ENCODE measurements at regions of chr7 and their contacts with region 1.

Region 1: DNA sequence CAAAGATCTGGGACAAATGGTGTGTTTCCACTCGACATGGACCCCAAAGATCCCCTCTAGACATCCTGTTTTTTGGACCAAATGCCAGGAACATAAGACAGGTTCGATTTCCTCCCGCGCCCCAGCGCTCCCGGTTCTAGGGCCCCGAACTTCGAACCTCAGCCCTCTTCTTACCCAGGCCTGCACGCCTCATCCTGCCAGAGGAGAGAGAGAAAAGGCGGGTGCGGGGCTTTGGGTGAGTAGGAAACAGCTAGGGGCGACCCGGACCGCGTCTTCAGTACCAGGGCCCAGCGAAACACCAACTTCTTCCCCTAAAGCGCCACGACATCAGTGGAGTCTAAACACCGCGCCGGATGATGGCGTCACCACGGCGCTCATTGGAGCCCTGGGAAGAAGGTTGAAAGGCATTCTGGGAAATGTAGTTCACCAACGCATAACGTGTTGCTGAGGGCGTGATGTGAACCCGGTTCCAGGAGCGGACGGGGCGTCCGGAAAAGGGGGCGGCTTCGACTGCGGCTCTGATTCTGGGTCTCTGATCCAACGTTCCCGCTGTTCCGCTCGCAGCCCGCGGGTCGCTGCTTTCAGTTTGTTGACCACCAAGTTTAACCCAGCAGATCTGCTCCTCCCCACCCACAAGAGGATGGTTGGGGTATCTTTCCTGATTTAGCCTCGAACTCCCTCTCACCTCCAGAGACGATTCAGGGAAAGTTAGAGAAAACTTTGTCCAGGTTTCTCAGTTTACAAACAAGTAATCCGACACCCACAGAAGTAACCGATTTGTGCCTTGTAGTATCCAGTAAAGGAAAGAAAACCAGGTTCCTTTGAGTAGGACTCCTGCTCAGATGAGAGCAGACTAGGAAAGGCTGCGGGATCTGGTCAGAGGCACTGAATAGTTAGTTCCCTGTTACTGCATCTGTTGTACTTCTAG is at the start of gene BET1:
- DNase-seq: peak; percentile 88 to 98
- H3K4me3 ChIP-seq: peak within 1 kb of the TSS; percentile 81 to 94
- H3K27ac ChIP-seq: peak within 1 kb of the TSS; percentile 89 to 91
- H3K4me1 ChIP-seq: peaks cover 0 to 3% of the 10 kb centered on the region in 2 donors
- H3K27me3 ChIP-seq: no peaks in the 10 kb centered on the region
- CTCF ChIP-seq: no peak
- total RNA-seq, gene BET1: 2.4 TPM

Region 2: GRCh38 chr7:93231799-93232672 is 772.3 kb before region 1 on chr7 and contains the start of gene VPS50:
- intact Hi-C with region 1: loop called (anchors 5 kb)
- DNase-seq: peak; percentile 86 to 98
- H3K4me3 ChIP-seq: peak within 1 kb of the TSS; percentile 90 to 91
- H3K27ac ChIP-seq: peak within 1 kb of the TSS in 1 of 2 donors; percentile 29
- H3K4me1 ChIP-seq: peaks cover 0 to 6% of the 10 kb centered on the region in 2 donors
- H3K27me3 ChIP-seq: no peaks in the 10 kb centered on the region
- CTCF ChIP-seq: no peak
- total RNA-seq, gene VPS50: 6.9 TPM

Region 3: DNA sequence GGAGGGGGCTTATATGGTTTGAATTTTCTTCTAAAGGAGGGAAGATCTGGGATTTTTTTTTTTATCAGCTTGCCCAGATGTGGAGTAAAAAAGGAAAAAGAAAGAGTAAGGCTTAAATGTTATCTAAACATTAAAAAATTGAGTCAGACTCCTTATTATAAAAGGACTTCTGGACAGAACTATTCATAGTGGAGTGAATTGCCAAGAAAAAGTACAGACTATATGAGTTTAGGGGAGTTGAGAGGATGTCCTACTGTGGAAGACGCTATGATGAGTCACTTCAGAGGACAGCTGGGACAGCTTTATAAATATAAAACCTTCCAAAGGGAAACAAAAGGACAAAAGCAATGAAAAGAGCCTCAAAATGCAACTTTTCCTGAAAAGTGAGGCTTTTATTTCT is 186.8 kb before region 1 on chr7:
- intact Hi-C with region 1: no loop called
- DNase-seq: no peak
- H3K4me3 ChIP-seq: no peak overlapping the region
- H3K27ac ChIP-seq: peak overlapping the region in 1 of 2 donors; percentile 3
- H3K4me1 ChIP-seq: peaks cover 0 to 4% of the 10 kb centered on the region in 2 donors
- H3K27me3 ChIP-seq: no peaks in the 10 kb centered on the region
- CTCF ChIP-seq: no peak

Region 4: DNA sequence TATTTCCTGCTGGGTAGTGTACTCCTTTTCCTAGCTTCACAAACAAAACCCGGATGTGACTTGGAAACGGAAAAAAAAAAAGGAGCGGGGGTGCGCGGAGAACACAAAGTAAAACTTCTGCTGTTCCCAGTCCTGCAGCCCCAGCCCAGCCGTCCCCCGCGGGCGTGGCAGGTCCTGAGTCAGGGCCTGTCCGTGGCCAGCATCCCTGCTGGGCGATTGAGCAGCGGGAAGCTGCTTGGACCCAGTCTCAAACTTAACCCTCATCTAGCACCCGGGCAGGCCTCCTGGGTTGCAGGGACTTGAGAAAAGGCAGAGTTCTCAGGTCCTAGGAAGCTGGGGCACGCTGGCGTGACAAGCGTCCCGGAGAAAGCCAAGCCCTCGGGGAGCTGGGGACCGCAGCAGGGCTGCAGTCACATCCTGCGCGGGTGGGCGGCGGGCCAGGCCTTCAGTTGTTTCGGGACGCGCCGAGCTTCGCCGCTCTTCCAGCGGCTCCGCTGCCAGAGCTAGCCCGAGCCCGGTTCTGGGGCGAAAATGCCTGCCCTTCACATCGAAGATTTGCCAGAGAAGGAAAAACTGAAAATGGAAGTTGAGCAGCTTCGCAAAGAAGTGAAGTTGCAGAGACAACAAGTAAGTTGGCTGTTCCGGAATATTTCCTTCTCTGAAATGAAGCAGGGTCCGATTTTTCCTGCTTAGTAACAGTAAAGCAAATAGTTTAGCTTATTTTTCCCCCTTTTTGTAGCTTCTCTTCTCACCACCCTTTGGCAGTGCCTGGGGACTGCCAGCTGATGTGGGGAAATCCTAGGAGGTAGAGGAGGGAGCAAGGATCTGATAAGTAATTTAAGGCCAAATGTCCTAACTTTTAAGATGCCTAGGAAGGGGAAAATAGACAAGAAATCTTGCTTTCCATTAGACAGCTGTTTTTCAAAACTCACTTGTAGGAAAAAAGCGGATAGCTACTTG is 82.4 kb before region 1 on chr7 and contains the start of gene GNG11:
- intact Hi-C with region 1: loop called (anchors 1 kb)
- DNase-seq: peak; percentile 8 to 82
- H3K4me3 ChIP-seq: peak within 1 kb of the TSS; percentile 60 to 79
- H3K27ac ChIP-seq: peak within 1 kb of the TSS; percentile 82 to 84
- H3K4me1 ChIP-seq: no peaks in the 10 kb centered on the region
- H3K27me3 ChIP-seq: no peaks in the 10 kb centered on the region
- CTCF ChIP-seq: no peak
- total RNA-seq, gene GNG11: 28.4 TPM

Region 5: DNA sequence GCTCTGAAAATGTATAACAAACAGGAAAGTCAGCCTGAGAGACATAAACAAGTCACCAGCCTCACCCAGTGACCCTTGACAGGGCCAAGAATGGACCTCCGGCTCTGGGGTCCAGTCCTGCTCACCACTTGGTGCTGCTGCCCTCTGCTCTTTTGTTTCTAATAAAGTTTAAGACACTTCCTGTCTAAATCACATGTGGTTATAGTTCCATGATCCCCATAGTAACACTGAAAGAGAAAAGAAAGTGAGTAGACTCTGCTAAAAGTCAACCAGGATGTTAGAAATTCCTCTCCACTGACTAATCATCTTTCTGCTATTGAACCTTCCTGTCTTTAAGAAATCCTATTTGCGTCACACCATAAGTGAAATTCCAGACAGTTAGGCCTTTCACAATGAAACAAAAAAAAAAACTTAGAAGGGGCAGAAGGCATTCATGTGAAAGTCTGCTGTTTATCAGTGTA is 179.0 kb after region 1 on chr7:
- intact Hi-C with region 1: loop called (anchors 5 kb)
- DNase-seq: no peak
- H3K4me3 ChIP-seq: no peak overlapping the region
- H3K27ac ChIP-seq: peak overlapping the region; percentile 65 to 79
- H3K4me1 ChIP-seq: peaks cover 0 to 7% of the 10 kb centered on the region in 2 donors
- H3K27me3 ChIP-seq: no peaks in the 10 kb centered on the region
- CTCF ChIP-seq: no peak

Measured in ascending aorta (tissue), 2 donors.